Mammary epithelial cell (primary cell): ENCODE measurements at regions of chr6 and their contacts with region 1.

Region 1: DNA sequence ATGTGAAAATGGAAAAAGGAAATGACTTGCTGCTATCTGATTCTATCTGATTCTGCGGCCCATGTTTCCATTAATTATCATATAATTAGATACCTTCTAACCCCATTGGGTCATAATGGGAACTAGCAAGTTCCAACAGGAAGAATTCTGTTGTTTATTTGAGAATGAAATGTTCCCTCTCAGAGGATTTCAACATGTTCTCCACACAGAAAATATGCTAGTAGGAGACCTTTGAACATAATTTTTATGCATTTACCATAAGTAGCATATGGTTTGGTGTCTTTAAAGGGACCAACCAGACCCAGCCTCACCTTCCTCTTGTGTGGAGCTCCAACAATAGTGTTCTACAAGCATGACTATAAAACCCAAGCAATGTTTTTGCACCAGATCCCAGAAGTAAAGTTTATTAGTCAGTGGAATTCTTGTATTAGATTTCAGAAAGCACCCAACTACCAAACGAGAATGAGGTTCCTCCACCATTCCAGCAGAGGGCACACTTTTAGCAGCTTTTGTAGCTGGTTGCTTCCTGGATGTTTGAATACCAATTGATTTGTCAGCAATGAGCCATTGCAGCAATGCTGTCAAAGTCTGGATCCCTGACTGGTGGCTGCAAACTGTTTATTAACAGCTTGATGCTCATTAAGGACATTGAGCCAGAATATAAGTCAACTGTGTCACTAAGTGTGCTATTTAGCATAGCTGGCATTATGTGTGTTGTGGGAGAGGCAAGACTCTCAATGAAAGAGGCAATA is 143.6 kb upstream of the GJE1 start:
- DNase-seq: peak; percentile 63
- H3K4me3 ChIP-seq: no peak overlapping the region
- H3K27ac ChIP-seq: no peak overlapping the region
- H3K4me1 ChIP-seq: peaks cover 4% of the 10 kb centered on the region
- H3K27me3 ChIP-seq: no peaks in the 10 kb centered on the region
- CTCF ChIP-seq: peak; percentile 77 to 91

Region 2: GRCh38 chr6:141677598-141678211 is 311.4 kb before region 1 on chr6:
- CTCF ChIA-PET with region 1: no interaction called
- dilution Hi-C with region 1: no loop called
- in situ Hi-C with region 1: no loop called
- intact Hi-C with region 1: loop called (anchors 10 kb)
- DNase-seq: peak; percentile 13
- H3K4me3 ChIP-seq: no peak overlapping the region
- H3K27ac ChIP-seq: no peak overlapping the region
- H3K4me1 ChIP-seq: no peaks in the 10 kb centered on the region
- H3K27me3 ChIP-seq: peaks cover 2% of the 10 kb centered on the region
- CTCF ChIP-seq: peak; percentile 58 to 73

Region 3: GRCh38 chr6:142014515-142014914 is 25.4 kb after region 1 on chr6:
- CTCF ChIA-PET with region 1: no interaction called
- dilution Hi-C with region 1: no loop called
- in situ Hi-C with region 1: no loop called
- intact Hi-C with region 1: loop called (anchors 2 kb)
- DNase-seq: peak; percentile 78
- H3K4me3 ChIP-seq: peak overlapping the region in 1 of 3 experiments; percentile 19
- H3K27ac ChIP-seq: peak overlapping the region; percentile 87
- H3K4me1 ChIP-seq: peaks cover 36% of the 10 kb centered on the region
- H3K27me3 ChIP-seq: no peaks in the 10 kb centered on the region
- CTCF ChIP-seq: no peak

Region 4: DNA sequence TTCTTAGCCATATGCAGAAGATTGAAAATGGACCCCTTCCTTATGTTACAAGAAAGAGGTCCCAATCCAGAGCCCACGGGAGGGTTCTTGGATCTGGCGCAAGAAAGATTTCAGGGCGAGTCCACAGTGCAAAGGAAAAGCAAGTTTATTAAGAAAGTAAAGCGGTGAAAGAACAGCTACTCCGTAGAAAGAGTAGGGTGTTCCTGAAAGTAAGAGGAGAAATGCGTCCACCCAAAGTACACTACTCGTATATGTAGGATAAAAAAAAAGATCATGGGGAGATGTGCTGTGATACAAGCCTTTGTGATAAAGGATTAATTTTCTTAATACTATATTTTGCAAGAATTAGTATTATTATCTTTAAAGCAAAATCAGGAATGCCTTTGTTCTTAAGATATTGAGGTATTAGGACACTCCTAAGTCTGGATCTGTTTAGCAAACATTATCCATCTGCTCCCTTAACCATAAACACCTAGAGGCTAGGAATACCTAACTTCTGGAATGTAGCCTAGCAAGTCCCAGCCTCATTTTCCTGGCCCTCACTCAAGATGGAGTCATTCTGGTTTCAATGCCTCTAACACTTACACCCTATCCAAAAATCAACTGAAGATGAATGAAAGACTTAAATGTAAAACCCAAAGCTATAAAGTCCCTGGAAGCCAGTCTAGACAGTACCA is 37.2 kb after region 1 on chr6:
- CTCF ChIA-PET with region 1: no interaction called
- dilution Hi-C with region 1: no loop called
- in situ Hi-C with region 1: no loop called
- intact Hi-C with region 1: no loop called
- DNase-seq: peak; percentile 33
- H3K4me3 ChIP-seq: no peak overlapping the region
- H3K27ac ChIP-seq: no peak overlapping the region
- H3K4me1 ChIP-seq: peaks cover 11% of the 10 kb centered on the region
- H3K27me3 ChIP-seq: no peaks in the 10 kb centered on the region
- CTCF ChIP-seq: no peak

Region 5: GRCh38 chr6:142045380-142046278 is 56.5 kb after region 1 on chr6:
- CTCF ChIA-PET with region 1: no interaction called
- dilution Hi-C with region 1: no loop called
- in situ Hi-C with region 1: loop called (anchors 5 kb)
- intact Hi-C with region 1: loop called (anchors 1 kb)
- DNase-seq: no peak
- H3K4me3 ChIP-seq: no peak overlapping the region
- H3K27ac ChIP-seq: no peak overlapping the region
- H3K4me1 ChIP-seq: peaks cover 3% of the 10 kb centered on the region
- H3K27me3 ChIP-seq: no peaks in the 10 kb centered on the region
- CTCF ChIP-seq: peak; percentile 26 to 38

Region 6: DNA sequence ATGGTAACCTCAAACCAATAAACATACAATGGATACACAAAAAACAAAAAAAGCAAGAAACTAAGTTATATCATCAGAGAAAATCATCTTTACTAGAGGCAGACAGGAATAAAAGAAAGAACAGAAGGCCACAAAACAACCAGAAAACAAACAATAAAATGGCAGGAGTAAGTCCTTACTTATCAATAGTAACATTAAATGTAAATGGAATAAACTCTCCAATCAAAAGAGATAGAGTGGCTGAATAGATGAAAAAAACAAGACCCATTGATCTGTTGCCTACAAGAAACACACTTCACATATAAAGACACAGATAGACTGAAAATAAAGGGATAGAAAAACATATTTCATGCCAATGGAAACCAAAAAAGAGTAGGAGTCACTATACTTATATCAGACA is 62.3 kb after region 1 on chr6:
- CTCF ChIA-PET with region 1: no interaction called
- dilution Hi-C with region 1: no loop called
- in situ Hi-C with region 1: loop called (anchors 5 kb)
- intact Hi-C with region 1: no loop called
- DNase-seq: no peak
- H3K4me3 ChIP-seq: no peak overlapping the region
- H3K27ac ChIP-seq: no peak overlapping the region
- H3K4me1 ChIP-seq: peaks cover 10% of the 10 kb centered on the region
- H3K27me3 ChIP-seq: no peaks in the 10 kb centered on the region
- CTCF ChIP-seq: no peak

Region 7: DNA sequence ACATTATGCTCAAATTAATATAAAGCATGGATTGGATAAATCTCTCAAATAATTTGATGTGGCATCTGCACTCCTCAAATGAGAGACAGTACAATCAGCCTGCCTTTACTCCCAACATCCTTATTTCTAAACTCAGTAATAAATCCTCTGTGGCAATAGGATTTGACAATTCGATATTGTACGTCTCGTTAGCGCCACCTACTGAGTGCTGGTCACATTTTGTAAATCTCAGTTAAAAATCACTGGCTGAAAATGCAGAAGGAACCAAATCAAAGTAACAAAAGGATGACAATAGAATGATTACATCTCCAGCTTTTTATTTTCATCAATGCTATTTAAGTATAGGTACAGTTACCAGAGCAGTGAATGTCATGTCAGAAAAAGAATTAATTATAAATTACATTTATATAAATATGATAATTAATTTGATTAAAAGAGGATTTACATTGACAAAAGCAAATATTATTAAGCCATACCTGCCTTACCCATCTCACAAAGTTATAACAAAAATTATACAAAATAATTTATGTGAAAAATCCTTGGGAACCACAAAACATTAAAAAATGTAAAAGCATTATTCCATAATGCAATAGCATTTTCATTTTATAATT is 123.4 kb after region 1 on chr6:
- CTCF ChIA-PET with region 1: interaction called, 3 read pairs
- dilution Hi-C with region 1: no loop called
- in situ Hi-C with region 1: loop called (anchors 10 to 25 kb)
- intact Hi-C with region 1: loop called (anchors 1 kb)
- DNase-seq: peak; percentile 48
- H3K4me3 ChIP-seq: no peak overlapping the region
- H3K27ac ChIP-seq: no peak overlapping the region
- H3K4me1 ChIP-seq: no peaks in the 10 kb centered on the region
- H3K27me3 ChIP-seq: no peaks in the 10 kb centered on the region
- CTCF ChIP-seq: peak; percentile 81 to 82

Region 8: GRCh38 chr6:142207265-142207877 is 218.2 kb after region 1 on chr6:
- CTCF ChIA-PET with region 1: no interaction called
- dilution Hi-C with region 1: no loop called
- in situ Hi-C with region 1: no loop called
- intact Hi-C with region 1: loop called (anchors 5 kb)
- DNase-seq: peak; percentile 32
- H3K4me3 ChIP-seq: no peak overlapping the region
- H3K27ac ChIP-seq: no peak overlapping the region
- H3K4me1 ChIP-seq: no peaks in the 10 kb centered on the region
- H3K27me3 ChIP-seq: no peaks in the 10 kb centered on the region
- CTCF ChIP-seq: peak; percentile 82 to 92

Region 9: GRCh38 chr6:143842902-143843676 is 1854.0 kb after region 1 on chr6 and contains the start of gene LTV1:
- CTCF ChIA-PET with region 1: no interaction called
- dilution Hi-C with region 1: no loop called
- in situ Hi-C with region 1: no loop called
- intact Hi-C with region 1: no loop called
- DNase-seq: peak; percentile 92
- H3K4me3 ChIP-seq: peak within 1 kb of the TSS; percentile 68 to 96 (median 74)
- H3K27ac ChIP-seq: peak within 1 kb of the TSS; percentile 94
- H3K4me1 ChIP-seq: peaks cover 6% of the 10 kb centered on the region
- H3K27me3 ChIP-seq: no peaks in the 10 kb centered on the region
- CTCF ChIP-seq: no peak
- total RNA-seq, gene LTV1: 11.8 to 34.2 TPM